Mucosa of descending colon (tissue), 3 donors: ENCODE measurements at regions of chr15 and their contacts with region 1.

Region 1: DNA sequence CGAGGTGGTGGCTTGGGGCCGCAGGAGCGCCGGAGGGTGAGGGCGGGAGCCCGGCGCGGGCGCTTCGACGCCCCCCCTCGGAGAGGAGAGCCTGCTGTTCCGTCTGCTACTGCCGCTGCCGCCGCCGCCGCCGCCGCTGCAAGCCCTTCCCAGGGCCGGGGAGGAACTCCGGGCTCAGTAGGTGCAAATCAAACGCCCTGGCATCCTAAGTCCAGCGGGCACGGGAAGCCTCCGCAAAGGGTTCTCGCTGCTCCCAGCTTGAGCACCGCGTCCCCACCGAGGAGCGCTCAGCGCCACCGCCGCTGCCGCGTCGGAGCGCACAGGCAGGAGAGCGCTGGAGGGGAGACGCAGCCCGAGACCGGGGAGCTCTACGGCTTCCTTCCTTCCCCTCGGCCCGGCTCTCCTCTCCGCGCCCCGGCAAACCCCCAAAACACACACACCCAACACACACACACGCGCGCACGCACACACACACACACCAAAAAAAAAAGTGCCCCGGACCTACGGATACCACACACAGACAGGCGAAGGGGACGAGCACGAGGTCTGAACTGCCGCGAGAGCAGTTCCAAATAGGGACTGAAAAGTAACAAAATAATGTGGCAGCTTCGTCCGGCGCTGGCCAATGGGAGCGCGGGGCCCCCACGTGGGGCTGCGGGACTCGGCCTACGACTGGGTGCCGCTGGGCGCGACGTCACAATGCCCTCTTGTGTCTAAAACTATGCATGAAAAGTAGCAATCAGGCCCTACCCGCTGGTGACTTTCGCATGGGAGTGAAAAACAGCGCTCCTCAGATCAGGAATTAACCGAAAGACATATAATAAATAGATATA is at the start of gene TLE3:
- DNase-seq: peak; percentile 98 to 100 (median 100)
- ATAC-seq: peak; percentile 58
- H3K4me3 ChIP-seq: peak within 1 kb of the TSS; percentile 87
- H3K4me1 ChIP-seq: peaks cover 50% of the 10 kb centered on the region
- CTCF ChIP-seq: peak; percentile 28
- total RNA-seq, gene TLE3: 77.6 to 123 (median 103) TPM

Region 2: DNA sequence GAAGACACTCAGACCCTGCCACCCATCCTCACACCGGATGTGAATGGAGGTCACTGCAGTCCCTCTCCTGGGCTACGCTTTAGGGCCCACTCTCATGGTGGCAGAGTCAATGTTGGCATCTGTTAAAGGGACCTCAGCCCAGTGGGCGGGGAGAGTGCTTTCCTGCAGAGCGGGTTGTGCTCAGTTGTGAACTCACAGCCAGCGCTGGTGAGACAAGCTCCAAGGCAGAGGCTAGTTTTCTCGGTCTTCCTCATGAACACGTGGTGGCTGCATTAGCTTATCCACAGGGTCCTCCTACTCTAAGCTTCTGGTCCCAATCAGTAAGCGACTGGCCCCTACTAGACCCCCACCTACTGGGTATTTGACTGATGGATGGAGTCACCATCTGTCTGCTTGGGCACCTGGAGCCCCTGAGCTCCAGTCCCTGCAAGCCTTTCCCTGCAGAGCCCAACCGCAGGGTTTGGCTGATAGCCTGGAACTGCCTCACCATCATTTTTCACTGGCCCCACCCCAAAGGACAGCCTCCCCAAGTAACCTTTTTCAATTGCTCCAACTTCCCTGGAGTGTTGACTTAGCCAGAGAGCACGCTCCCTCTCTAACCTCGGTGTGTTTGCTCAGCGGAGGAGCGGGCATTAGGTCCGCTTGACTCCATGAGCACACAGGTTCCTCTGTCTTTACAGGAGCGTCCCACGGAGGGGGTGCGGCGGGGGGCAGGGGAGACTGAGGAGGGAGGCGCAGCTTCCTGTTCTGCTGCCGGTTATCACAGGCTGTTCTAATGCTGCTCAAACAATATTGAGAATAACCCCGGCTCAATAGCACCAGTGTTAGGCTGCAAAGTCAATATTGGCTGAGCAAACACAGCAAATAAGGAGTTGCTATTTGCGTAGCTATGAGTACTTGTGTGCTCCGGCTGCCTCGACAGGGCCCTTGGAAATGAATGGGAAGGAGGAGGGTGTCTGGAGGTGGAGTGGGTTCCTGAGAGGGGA is 503.3 kb before region 1 on chr15:
- intact Hi-C with region 1: loop called in 1 of 2 experiments (anchors 10 kb)
- DNase-seq: peak; percentile 89 to 93 (median 92)
- ATAC-seq: peak; percentile 88
- H3K4me3 ChIP-seq: no peak overlapping the region
- H3K4me1 ChIP-seq: peaks cover 35% of the 10 kb centered on the region
- CTCF ChIP-seq: no peak

Region 3: GRCh38 chr15:70327856-70328678 is 230.5 kb after region 1 on chr15:
- intact Hi-C with region 1: loop called in 1 of 2 experiments (anchors 10 kb)
- DNase-seq: peak in 2 of 3 donors; percentile 40 to 61
- ATAC-seq: peak; percentile 66
- H3K4me3 ChIP-seq: no peak overlapping the region
- H3K4me1 ChIP-seq: peaks cover 7% of the 10 kb centered on the region
- CTCF ChIP-seq: no peak